ENCODE measurements at regions of chr7 and their contacts with region 1.

Region 1: GRCh38 chr7:77798394-77799077 is at the starts of genes PHTF2 and TMEM60:
- DNase-seq: peak; percentile 78 to 97 (median 95)
- ATAC-seq: peak; percentile 94
- H3K4me3 ChIP-seq: peak within 1 kb of the TSS; percentile 85
- H3K4me3 Mint-ChIP-seq: peak within 1 kb of the TSS; percentile 87 to 99 (median 96)
- H3K27ac ChIP-seq: peak within 1 kb of the TSS; percentile 73
- H3K27ac Mint-ChIP-seq: peak within 1 kb of the TSS; percentile 89 to 96 (median 94)
- H3K4me1 ChIP-seq: peaks cover 45 to 52% of the 10 kb centered on the region in 2 donors
- H3K4me1 Mint-ChIP-seq: peaks cover 53 to 83% (median 79%) of the 10 kb centered on the region in 7 donors
- H3K27me3 ChIP-seq: no peaks in the 10 kb centered on the region
- H3K27me3 Mint-ChIP-seq: no peaks in the 10 kb centered on the region
- total RNA-seq, gene PHTF2: 17.6 to 42.1 (median 22.4) TPM
- total RNA-seq, gene TMEM60: 3.7 to 16.9 (median 12.0) TPM

Region 2: GRCh38 chr7:77415823-77416622 is 382.5 kb before region 1 on chr7 and contains the start of gene GSAP:
- CTCF ChIA-PET with region 1: no interaction called
- POLR2A ChIA-PET with region 1: interaction called, 3 read pairs
- intact Hi-C with region 1: loop called in 1 of 2 experiments (anchors 1 kb)
- DNase-seq: peak; percentile 36 to 59 (median 47)
- ATAC-seq: peak; percentile 83
- H3K4me3 ChIP-seq: peak within 1 kb of the TSS; percentile 75
- H3K4me3 Mint-ChIP-seq: peak within 1 kb of the TSS; percentile 67 to 87 (median 83)
- H3K27ac ChIP-seq: peak within 1 kb of the TSS; percentile 71
- H3K27ac Mint-ChIP-seq: peak within 1 kb of the TSS; percentile 56 to 89 (median 86)
- H3K4me1 ChIP-seq: peaks cover 7 to 8% of the 10 kb centered on the region in 2 donors
- H3K4me1 Mint-ChIP-seq: peaks cover 25 to 56% (median 49%) of the 10 kb centered on the region in 7 donors
- H3K27me3 ChIP-seq: no peaks in the 10 kb centered on the region
- H3K27me3 Mint-ChIP-seq: peaks cover 0 to 25% (median 0%) of the 10 kb centered on the region in 5 donors
- total RNA-seq, gene GSAP: 14.9 to 59.8 (median 29.2) TPM

Region 3: GRCh38 chr7:77738871-77739270 is 59.7 kb before region 1 on chr7:
- CTCF ChIA-PET with region 1: no interaction called
- POLR2A ChIA-PET with region 1: no interaction called
- intact Hi-C with region 1: no loop called
- DNase-seq: no peak
- ATAC-seq: no peak
- H3K4me3 ChIP-seq: no peak overlapping the region
- H3K4me3 Mint-ChIP-seq: no peak overlapping the region
- H3K27ac ChIP-seq: no peak overlapping the region
- H3K27ac Mint-ChIP-seq: peak overlapping the region in 3 of 9 donors; percentile 34 to 55 (median 49)
- H3K4me1 ChIP-seq: no peaks in the 10 kb centered on the region
- H3K4me1 Mint-ChIP-seq: peaks cover 5 to 32% (median 11%) of the 10 kb centered on the region in 7 donors
- H3K27me3 ChIP-seq: no peaks in the 10 kb centered on the region
- H3K27me3 Mint-ChIP-seq: no peaks in the 10 kb centered on the region

Region 4: GRCh38 chr7:77830649-77831355 is 32.3 kb after region 1 on chr7:
- CTCF ChIA-PET with region 1: no interaction called
- POLR2A ChIA-PET with region 1: interaction called, 10 read pairs
- intact Hi-C with region 1: loop called (anchors 1 kb)
- DNase-seq: no peak
- ATAC-seq: no peak
- H3K4me3 ChIP-seq: no peak overlapping the region
- H3K4me3 Mint-ChIP-seq: no peak overlapping the region
- H3K27ac ChIP-seq: no peak overlapping the region
- H3K27ac Mint-ChIP-seq: peak overlapping the region in 6 of 9 donors; percentile 22 to 65 (median 28)
- H3K4me1 ChIP-seq: peaks cover 10 to 11% of the 10 kb centered on the region in 2 donors
- H3K4me1 Mint-ChIP-seq: peaks cover 13 to 68% (median 56%) of the 10 kb centered on the region in 7 donors
- H3K27me3 ChIP-seq: no peaks in the 10 kb centered on the region
- H3K27me3 Mint-ChIP-seq: no peaks in the 10 kb centered on the region

Region 5: DNA sequence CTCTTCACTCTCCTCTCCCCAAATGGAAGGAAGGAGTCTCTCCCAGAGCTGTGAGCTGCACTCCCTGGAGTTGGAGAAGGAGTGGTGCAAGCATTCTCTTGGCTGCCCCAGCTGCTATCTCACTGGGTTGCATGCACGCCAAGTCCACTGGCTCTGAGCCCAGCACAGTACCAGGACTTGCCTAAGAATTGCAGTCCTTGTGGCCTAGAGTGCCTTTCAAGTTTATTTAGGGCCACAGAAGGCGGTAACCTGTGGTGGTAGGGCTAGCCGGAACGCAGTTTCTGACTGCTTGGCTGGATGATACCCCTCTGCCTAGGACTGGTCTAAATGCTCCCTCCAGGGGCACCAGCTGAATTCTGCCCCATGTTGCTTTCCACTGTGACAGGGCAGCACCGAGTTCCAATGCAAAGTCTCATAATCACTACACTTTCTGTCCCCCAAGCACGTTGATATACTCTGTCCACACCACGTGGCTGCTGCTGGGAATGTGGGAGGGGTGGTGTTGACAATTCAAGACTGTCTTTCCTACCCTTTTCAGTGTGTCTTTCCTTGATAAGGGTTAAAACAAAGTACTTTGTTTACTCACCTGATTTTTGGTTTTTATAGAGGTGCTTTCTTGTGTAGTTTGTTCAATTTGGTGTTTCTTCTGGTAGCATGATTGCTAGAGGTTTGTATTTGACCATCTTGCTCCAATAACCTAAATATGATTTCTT is 57.0 kb after region 1 on chr7:
- CTCF ChIA-PET with region 1: no interaction called
- POLR2A ChIA-PET with region 1: no interaction called
- intact Hi-C with region 1: no loop called
- DNase-seq: no peak
- ATAC-seq: no peak
- H3K4me3 ChIP-seq: no peak overlapping the region
- H3K4me3 Mint-ChIP-seq: no peak overlapping the region
- H3K27ac ChIP-seq: no peak overlapping the region
- H3K27ac Mint-ChIP-seq: no peak overlapping the region
- H3K4me1 ChIP-seq: peaks cover 4 to 14% of the 10 kb centered on the region in 2 donors
- H3K4me1 Mint-ChIP-seq: peaks cover 31 to 61% (median 48%) of the 10 kb centered on the region in 7 donors
- H3K27me3 ChIP-seq: no peaks in the 10 kb centered on the region
- H3K27me3 Mint-ChIP-seq: no peaks in the 10 kb centered on the region

Region 6: DNA sequence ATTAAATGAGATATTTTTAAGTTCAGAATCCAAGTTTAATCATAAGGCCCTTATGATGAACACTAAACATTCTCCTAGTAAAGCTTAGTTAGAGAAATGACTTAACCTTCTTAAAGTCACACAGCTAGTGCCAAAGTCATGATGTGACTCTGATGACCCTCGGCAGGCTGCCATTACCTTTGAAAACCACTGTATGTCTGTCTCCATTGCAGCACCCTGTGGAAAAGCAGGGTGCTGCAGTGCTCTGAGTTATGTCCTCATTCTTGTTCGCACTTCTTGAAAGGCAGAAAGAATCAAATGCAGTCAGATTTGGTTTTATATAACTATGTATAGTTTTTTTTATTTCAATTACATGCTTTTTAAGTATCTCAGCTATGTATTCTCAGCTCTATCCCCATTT is 105.1 kb after region 1 on chr7:
- CTCF ChIA-PET with region 1: no interaction called
- POLR2A ChIA-PET with region 1: no interaction called
- intact Hi-C with region 1: loop called (anchors 5 kb)
- DNase-seq: no peak
- ATAC-seq: peak; percentile 44
- H3K4me3 ChIP-seq: no peak overlapping the region
- H3K4me3 Mint-ChIP-seq: no peak overlapping the region
- H3K27ac ChIP-seq: no peak overlapping the region
- H3K27ac Mint-ChIP-seq: peak overlapping the region in 1 of 9 donors; percentile 17
- H3K4me1 ChIP-seq: no peaks in the 10 kb centered on the region
- H3K4me1 Mint-ChIP-seq: peaks cover 0 to 12% (median 0%) of the 10 kb centered on the region in 7 donors
- H3K27me3 ChIP-seq: no peaks in the 10 kb centered on the region
- H3K27me3 Mint-ChIP-seq: no peaks in the 10 kb centered on the region

Region 7: DNA sequence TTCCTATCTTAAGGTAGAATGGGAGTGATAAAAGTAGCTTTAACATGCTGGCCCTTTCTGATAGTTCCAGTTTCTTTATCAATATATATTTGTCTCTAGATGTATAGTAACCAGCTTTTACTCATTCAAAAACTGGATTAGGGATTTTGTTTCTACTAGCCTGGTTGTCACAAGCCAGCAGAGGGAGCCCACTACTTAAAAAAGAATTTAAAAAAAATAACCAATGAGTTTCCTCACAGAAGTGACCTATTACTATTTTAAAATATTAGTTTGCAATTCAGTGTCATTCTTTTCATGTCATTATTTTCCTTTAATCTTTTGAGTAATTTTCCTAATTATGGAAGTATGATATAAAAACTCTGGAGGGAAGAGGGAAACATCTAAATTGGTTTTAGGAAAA is 142.1 kb after region 1 on chr7:
- CTCF ChIA-PET with region 1: no interaction called
- POLR2A ChIA-PET with region 1: no interaction called
- intact Hi-C with region 1: loop called (anchors 1 to 10 kb)
- DNase-seq: no peak
- ATAC-seq: no peak
- H3K4me3 ChIP-seq: no peak overlapping the region
- H3K4me3 Mint-ChIP-seq: no peak overlapping the region
- H3K27ac ChIP-seq: no peak overlapping the region
- H3K27ac Mint-ChIP-seq: no peak overlapping the region
- H3K4me1 ChIP-seq: no peaks in the 10 kb centered on the region
- H3K4me1 Mint-ChIP-seq: peaks cover 8 to 14% (median 9%) of the 10 kb centered on the region in 7 donors
- H3K27me3 ChIP-seq: no peaks in the 10 kb centered on the region
- H3K27me3 Mint-ChIP-seq: no peaks in the 10 kb centered on the region

Region 8: GRCh38 chr7:78020136-78020873 is 221.8 kb after region 1 on chr7:
- CTCF ChIA-PET with region 1: no interaction called
- POLR2A ChIA-PET with region 1: no interaction called
- intact Hi-C with region 1: loop called (anchors 5 kb)
- DNase-seq: peak in 5 of 9 donors; percentile 18 to 44 (median 25)
- ATAC-seq: peak; percentile 63
- H3K4me3 ChIP-seq: peak overlapping the region; percentile 31
- H3K4me3 Mint-ChIP-seq: peak overlapping the region; percentile 72 to 88 (median 83)
- H3K27ac ChIP-seq: no peak overlapping the region
- H3K27ac Mint-ChIP-seq: peak overlapping the region in 2 of 9 donors; percentile 28 to 56
- H3K4me1 ChIP-seq: peaks cover 0 to 7% of the 10 kb centered on the region in 2 donors
- H3K4me1 Mint-ChIP-seq: peaks cover 6 to 15% (median 11%) of the 10 kb centered on the region in 7 donors
- H3K27me3 ChIP-seq: peaks cover 0 to 13% of the 10 kb centered on the region in 2 donors
- H3K27me3 Mint-ChIP-seq: peaks cover 17 to 53% (median 39%) of the 10 kb centered on the region in 5 donors

Measured in naive thymus-derived CD4-positive, alpha-beta T cell (primary cell).